Activated naive CD8-positive, alpha-beta T cell treated with anti-CD3 and anti-CD28 coated beads, Interleukin-2, amount 10 ng/mL, durations not matched to agents 7 days and 5 days (primary cell): ENCODE measurements at regions of chr7 and their contacts with region 1.

Region 1: DNA sequence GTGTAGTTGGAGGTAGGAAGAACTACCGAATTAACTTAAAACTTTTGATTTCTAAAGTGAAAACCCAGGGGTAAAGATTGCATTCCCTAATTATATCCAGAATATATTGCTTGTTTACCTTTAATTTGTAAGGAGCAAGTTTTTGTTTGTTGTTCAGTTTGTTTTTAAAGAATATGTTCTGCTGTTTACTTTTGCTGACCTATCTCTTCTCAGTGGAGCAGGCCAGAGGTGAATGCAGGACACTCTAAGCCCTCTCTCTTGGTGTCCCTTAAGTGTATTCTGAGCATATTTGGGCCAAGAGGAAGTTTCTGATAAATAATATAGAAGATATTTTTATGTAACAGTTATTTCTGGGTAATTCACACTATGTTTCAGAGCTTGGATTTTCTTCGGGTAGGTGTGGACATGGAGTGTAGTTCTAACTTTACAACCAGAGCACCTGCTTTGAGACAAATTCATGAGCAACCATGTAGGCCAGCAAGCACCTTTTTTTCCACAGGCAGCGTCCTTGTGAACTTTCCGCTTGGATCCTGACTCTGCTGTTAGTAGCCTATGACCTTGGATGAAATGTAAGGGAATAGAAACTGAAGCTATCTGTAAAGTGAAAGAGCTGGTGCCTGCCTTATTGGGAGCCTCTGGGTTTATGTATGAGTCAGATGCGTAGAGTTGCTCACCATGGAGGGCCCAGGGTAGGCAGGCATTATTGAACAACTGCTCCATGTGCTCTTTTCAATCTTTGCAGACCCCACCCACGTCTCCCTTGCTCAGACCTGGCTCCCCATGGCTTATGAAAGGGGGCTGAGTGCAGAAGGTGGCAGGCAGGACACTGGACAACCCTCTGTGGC is 16.1 kb downstream of the OGDH start:
- DNase-seq: no peak
- ATAC-seq: peak; percentile 80
- H3K4me3 Mint-ChIP-seq: peak overlapping the region; percentile 58
- H3K27ac Mint-ChIP-seq: peak overlapping the region; percentile 92
- H3K4me1 Mint-ChIP-seq: peaks cover 50% of the 10 kb centered on the region
- H3K27me3 Mint-ChIP-seq: no peaks in the 10 kb centered on the region

Region 2: GRCh38 chr7:44595934-44596635 is 26.4 kb before region 1 on chr7:
- POLR2A ChIA-PET with region 1: no interaction called
- DNase-seq: no peak
- ATAC-seq: no peak
- H3K4me3 Mint-ChIP-seq: no peak overlapping the region
- H3K27ac Mint-ChIP-seq: no peak overlapping the region
- H3K4me1 Mint-ChIP-seq: peaks cover 2% of the 10 kb centered on the region
- H3K27me3 Mint-ChIP-seq: peaks cover 19% of the 10 kb centered on the region

Region 3: GRCh38 chr7:44638611-44639557 is 16.4 kb after region 1 on chr7:
- POLR2A ChIA-PET with region 1: interaction called, 90 read pairs
- DNase-seq: peak; percentile 78
- ATAC-seq: peak; percentile 86
- H3K4me3 Mint-ChIP-seq: peak overlapping the region; percentile 86
- H3K27ac Mint-ChIP-seq: peak overlapping the region; percentile 99
- H3K4me1 Mint-ChIP-seq: peaks cover 58% of the 10 kb centered on the region
- H3K27me3 Mint-ChIP-seq: no peaks in the 10 kb centered on the region